Endothelial cell of umbilical vein (primary cell): ENCODE measurements at regions of chr1 and their contacts with region 1.

Region 1: DNA sequence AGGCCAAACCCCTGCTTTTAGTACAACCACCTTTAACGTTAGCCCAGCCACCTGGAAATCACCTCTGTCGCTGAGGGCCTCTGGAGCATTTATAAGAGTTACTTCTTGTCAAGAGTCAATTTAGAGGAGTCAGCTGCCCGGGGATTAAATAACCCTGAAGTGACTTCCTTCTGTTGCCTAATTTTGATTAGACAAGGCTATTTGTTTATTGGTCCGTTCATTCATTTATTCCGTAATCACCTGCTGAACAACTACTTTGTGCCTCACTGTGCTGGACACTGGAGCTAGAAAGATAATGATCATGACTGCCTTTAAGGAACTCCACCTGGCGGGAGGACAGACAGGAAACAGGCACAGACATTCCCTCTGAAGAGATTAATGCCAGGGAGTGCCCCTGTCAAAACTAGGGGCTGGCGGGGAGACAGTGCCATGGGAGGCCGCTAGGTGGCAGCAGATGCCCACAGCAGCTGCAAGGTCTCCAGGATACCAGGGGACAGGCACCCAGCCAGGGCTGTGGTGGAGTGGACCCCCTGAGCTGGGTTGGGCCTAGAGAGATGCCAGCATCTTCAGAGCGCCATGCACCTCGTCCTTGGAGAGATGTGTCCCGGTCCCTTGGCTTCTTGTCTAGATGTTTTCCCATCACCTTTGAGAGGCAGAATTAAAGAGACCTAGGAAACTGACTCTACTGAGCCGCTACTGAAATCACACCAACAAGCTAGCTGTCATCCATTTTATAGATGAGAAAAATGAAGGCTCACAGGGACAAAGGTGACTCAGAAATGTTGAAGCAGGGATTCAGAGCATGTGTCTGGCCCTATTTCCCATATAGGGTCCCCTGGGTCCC is 3.7 kb downstream of the REN start:
- DNase-seq: peak; percentile 68
- H3K4me3 ChIP-seq: no peak overlapping the region
- H3K27ac ChIP-seq: no peak overlapping the region
- H3K4me1 ChIP-seq: peaks cover 3% of the 10 kb centered on the region
- H3K27me3 ChIP-seq: peaks cover 0 to 2% of the 10 kb centered on the region in 2 experiments
- CTCF ChIP-seq: peak; percentile 98
- POLR2A ChIP-seq: no peak

Region 2: DNA sequence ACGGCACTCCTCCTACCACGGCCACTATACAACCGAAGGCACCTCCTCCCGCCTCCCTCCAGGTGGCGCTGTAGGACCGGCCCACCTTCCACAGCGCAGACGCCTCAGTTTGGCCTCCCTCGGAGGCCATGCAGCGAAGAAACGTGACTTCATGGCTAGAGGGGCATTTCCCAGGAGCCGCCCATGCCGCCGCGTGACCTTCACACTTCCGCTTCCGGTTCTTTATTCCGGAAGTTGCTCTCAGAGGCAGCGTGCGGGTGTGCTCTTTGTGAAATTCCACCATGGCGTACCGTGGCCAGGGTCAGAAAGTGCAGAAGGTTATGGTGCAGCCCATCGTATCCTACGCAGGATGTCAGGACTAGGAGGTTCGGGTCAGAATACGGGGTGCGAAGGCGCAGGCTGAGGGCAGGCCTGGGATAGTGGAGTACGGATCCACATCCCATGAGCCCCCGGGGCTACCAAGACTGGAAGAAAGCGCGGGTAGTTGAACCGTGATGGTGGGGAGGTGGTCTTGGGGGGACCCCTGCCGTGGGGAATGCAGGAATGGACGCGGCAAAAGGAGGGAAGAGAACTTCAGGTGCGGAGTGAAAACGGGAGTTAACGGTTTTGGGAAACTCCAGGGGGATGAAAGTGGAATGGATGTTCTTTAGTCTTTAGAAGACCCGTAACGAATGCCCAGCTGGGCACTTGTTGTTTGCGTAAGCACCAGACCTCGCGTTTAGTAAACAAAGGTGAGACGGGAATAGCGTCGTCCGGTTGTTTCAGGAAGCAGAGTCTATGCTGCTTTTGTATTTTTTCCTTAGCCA is 300.9 kb before region 1 on chr1 and contains the start of gene SNRPE:
- CTCF ChIA-PET with region 1: interaction called, 3 read pairs
- POLR2A ChIA-PET with region 1: no interaction called
- dilution Hi-C with region 1: no loop called
- intact Hi-C with region 1: loop called (anchors 1 kb)
- DNase-seq: peak; percentile 99
- H3K4me3 ChIP-seq: peak within 1 kb of the TSS; percentile 67 to 99 (median 94)
- H3K27ac ChIP-seq: peak within 1 kb of the TSS; percentile 71
- H3K4me1 ChIP-seq: peaks cover 23% of the 10 kb centered on the region
- H3K27me3 ChIP-seq: no peaks in the 10 kb centered on the region
- CTCF ChIP-seq: peak; percentile 92 to 95
- POLR2A ChIP-seq: peak; percentile 84
- total RNA-seq, gene SNRPE: 199 and 219 TPM in 2 replicates

Region 3: DNA sequence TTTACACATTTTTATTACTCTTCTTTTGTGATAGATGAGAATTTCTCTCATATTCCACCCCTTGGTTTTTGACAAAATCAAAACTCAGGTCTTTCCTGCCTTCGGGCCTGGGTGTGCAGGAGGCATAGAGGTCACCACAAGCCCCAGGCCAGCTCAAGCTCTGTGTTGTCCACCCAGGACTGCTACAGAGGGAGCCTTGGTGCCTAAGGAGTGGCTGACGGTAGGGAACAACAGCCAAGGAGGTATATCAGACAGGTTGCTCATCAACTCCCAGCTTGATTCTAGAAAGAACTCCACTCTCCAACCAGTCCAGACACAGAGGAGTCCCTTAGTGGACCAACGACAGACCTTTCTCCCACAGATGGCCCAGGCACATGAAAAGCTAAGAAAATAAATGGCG is 20.4 kb after region 1 on chr1:
- CTCF ChIA-PET with region 1: interaction called, 13 read pairs
- POLR2A ChIA-PET with region 1: no interaction called
- dilution Hi-C with region 1: no loop called
- intact Hi-C with region 1: no loop called
- DNase-seq: no peak
- H3K4me3 ChIP-seq: no peak overlapping the region
- H3K27ac ChIP-seq: no peak overlapping the region
- H3K4me1 ChIP-seq: no peaks in the 10 kb centered on the region
- H3K27me3 ChIP-seq: no peaks in the 10 kb centered on the region
- CTCF ChIP-seq: no peak
- POLR2A ChIP-seq: no peak

Region 4: GRCh38 chr1:204198151-204198994 is 35.9 kb after region 1 on chr1:
- CTCF ChIA-PET with region 1: interaction called, 770 read pairs
- POLR2A ChIA-PET with region 1: no interaction called
- dilution Hi-C with region 1: no loop called
- intact Hi-C with region 1: loop called (anchors 1 kb)
- DNase-seq: peak; percentile 89
- H3K4me3 ChIP-seq: no peak overlapping the region
- H3K27ac ChIP-seq: peak overlapping the region; percentile 87
- H3K4me1 ChIP-seq: peaks cover 32% of the 10 kb centered on the region
- H3K27me3 ChIP-seq: no peaks in the 10 kb centered on the region
- CTCF ChIP-seq: no peak
- POLR2A ChIP-seq: no peak

Region 5: DNA sequence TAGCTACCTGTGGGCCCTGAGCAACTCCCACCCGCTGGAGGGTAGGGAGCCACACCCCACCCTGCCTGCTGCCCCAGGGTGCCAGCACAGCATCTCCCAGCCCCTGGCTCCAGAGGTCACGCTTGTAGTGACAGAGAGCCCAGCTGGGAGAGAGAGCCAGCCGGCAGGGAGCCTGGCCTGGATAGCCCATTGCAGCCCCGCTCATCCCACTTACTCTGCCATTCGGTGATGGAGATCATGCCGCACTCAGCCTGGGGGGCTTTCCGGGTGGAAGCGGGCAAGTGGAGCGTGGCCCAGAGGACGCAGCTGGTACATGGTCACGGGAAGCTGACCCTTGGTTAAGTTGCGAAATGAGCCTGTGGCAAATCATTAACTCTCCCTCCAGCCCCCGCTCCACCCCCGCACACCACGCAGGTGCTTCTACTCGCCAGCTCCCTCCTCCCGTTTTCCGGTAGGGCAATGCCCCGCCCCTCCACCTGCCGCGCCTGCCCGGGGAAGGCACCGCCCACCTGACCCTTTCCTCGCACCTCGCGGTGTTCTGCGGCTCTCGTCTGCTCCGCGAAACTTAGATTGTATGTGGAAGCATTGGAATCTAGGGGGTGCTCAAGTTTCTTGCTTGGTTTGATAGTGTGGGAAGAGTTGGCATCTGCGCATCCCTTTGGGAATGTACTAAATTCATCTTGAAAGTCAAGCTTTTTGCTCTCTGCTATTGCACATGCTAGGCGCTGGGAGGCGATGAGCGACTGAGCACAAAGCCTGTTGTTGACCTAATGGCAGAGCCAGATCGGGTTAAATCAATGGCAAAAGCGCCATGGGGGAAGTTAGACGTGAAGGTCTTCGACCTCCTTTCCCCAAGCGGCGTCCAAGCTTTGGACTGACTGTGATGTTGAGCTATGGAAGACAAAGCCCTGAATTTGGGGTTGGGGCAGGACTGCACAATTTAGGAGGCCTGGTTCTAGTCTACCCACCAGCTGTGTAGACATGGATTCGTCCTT is 51.5 kb after region 1 on chr1 and contains the start of gene GOLT1A:
- CTCF ChIA-PET with region 1: interaction called, 35 read pairs
- POLR2A ChIA-PET with region 1: no interaction called
- dilution Hi-C with region 1: no loop called
- intact Hi-C with region 1: no loop called
- DNase-seq: peak; percentile 75
- H3K4me3 ChIP-seq: no peak within 1 kb of the TSS
- H3K27ac ChIP-seq: no peak within 1 kb of the TSS
- H3K4me1 ChIP-seq: no peaks in the 10 kb centered on the region
- H3K27me3 ChIP-seq: no peaks in the 10 kb centered on the region
- CTCF ChIP-seq: peak; percentile 75
- POLR2A ChIP-seq: no peak
- total RNA-seq, gene GOLT1A: not detected in 2 replicates

Region 6: DNA sequence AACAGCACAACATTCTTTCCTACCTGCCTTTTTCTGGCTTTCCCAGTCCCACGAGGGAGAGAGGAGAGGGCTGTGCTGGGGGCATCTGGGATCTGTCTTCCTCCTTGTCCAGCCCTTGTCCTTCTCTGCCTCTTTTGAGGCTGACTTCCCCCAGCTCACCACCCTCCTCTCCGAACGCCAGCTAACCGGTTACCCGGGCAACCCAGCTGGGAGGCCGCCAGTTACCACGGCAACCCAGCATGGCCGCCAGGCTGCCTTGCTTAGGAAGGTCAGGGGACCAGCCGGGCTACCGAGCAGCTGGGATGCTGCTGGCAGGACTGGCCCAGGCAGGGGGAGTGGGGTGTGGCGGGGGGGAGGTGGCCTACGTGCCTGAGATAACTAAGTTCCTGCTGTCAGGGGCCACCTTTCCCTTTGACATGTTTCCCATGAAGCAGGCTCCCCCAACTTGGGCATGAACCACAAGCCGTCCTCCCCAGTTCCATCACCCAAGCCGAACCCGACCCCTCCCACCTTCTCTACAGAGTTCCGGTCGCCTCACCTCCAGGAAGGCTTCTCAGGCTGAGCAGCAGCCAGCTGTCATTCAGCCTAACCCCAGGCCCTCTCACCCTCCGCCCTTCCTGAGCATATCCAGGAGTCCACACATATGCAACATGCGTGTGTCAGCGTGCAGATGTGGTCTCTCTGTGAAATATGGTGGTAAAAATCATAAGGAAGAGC is 188.6 kb after region 1 on chr1:
- CTCF ChIA-PET with region 1: no interaction called
- POLR2A ChIA-PET with region 1: no interaction called
- dilution Hi-C with region 1: loop called (anchors 25 kb)
- intact Hi-C with region 1: no loop called
- DNase-seq: peak; percentile 79
- H3K4me3 ChIP-seq: no peak overlapping the region
- H3K27ac ChIP-seq: no peak overlapping the region
- H3K4me1 ChIP-seq: peaks cover 4% of the 10 kb centered on the region
- H3K27me3 ChIP-seq: no peaks in the 10 kb centered on the region
- CTCF ChIP-seq: no peak
- POLR2A ChIP-seq: no peak

Region 7: GRCh38 chr1:204846546-204847167 is 684.2 kb after region 1 on chr1:
- CTCF ChIA-PET with region 1: no interaction called
- POLR2A ChIA-PET with region 1: no interaction called
- dilution Hi-C with region 1: no loop called
- intact Hi-C with region 1: no loop called
- DNase-seq: no peak
- H3K4me3 ChIP-seq: no peak overlapping the region
- H3K27ac ChIP-seq: no peak overlapping the region
- H3K4me1 ChIP-seq: no peaks in the 10 kb centered on the region
- H3K27me3 ChIP-seq: no peaks in the 10 kb centered on the region
- CTCF ChIP-seq: no peak
- POLR2A ChIP-seq: no peak